ENCODE measurements at regions of chr12 and their contacts with region 1.

Region 1: DNA sequence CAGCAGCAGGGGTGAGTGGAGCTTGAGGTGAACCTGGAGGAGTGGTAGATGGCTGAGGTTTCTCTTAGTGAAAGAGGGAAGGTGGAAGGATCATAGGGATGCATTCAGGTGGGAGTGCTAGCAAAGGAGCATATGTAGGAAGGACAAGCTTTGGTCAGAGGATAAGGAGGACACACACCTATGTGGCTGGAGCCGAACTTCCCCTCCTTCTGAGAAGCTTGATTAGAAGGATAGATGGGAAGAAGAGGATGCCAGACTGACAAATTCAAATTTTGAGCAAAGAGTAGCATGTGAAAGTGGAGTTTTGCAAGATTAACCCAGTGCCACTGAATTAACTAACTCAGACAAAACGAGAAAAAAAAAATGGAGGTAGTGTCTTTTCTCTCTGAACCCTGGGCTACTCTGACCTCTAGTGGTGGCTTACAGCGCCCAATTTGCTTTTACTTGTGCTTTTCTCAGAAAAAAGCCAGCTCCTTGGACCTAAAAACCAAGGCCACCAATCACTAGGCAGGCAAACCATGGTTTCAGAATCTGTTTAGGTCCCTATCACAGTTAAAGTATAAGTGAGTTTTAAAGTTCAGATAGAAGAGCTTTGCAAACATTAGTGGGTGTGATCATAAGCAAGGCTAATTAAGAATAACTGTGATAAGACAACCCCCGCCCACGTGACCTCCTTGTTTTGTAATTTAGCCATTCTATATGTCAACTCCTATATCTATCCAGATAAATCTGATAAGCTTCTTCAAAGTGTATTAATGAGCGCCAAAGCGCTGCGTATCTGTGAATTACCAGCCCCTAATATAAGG is 15.5 kb downstream of the EMP1 start:
- DNase-seq: peak; percentile 56
- H3K4me3 ChIP-seq: 0 out of 4 replicates have a peak overlapping the region, but pooled peaks of 1 of the 2 experiments have one; percentile 14
- H3K27ac ChIP-seq: peak overlapping the region in 1 of 2 experiments; percentile 100; a peak in 2 of 4 replicates
- H3K4me1 ChIP-seq: peaks cover 7 to 46% of the 10 kb centered on the region in 2 experiments
- H3K27me3 ChIP-seq: no peaks in the 10 kb centered on the region
- CTCF ChIP-seq: peak; percentile 94
- EP300 ChIP-seq: no peak
- RAD21 ChIP-seq: peak; percentile 93

Region 2: DNA sequence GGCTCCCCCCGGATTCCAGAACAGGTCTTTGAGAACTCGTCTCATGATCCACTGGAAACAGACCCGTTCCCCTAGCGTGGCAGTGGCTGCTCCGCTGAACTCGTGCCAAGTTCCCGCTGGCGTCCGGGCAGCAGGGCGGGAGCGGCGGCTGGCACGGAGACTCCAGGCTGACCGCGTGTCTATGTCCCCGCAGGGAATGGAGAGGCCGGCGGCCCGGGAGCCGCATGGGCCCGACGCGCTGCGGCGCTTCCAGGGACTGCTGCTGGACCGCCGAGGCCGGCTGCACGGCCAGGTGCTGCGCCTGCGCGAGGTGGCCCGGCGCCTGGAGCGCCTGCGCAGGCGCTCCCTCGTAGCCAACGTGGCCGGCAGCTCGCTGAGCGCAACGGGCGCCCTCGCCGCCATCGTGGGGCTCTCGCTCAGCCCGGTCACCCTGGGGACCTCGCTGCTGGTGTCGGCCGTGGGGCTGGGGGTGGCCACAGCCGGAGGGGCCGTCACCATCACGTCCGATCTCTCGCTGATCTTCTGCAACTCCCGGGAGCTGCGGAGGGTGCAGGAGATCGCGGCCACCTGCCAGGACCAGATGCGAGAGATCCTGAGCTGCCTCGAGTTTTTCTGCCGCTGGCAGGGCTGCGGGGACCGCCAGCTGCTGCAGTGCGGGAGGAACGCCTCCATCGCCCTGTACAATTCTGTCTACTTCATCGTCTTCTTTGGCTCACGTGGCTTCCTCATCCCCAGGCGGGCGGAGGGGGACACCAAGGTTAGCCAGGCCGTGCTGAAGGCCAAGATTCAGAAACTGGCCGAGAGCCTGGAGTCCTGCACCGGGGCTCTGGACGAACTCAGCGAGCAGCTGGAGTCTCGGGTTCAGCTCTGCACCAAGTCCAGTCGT is 425.1 kb before region 1 on chr12:
- CTCF ChIA-PET with region 1: interaction called, 17 read pairs
- POLR2A ChIA-PET with region 1: no interaction called
- DNase-seq: peak; percentile 97
- H3K4me3 ChIP-seq: peak overlapping the region; percentile 51 to 54
- H3K27ac ChIP-seq: peak overlapping the region; percentile 49 to 92; a peak in 3 of 4 replicates
- H3K4me1 ChIP-seq: peaks cover 5 to 30% of the 10 kb centered on the region in 2 experiments; a peak in 3 of 4 replicates
- H3K27me3 ChIP-seq: no peaks in the 10 kb centered on the region
- CTCF ChIP-seq: 0 out of 2 replicates have a peak, but pooled peaks have one; percentile 5
- EP300 ChIP-seq: peak in 1 of 2 experiments; percentile 22; a peak in 1 of 4 replicates
- RAD21 ChIP-seq: no peak

Region 3: DNA sequence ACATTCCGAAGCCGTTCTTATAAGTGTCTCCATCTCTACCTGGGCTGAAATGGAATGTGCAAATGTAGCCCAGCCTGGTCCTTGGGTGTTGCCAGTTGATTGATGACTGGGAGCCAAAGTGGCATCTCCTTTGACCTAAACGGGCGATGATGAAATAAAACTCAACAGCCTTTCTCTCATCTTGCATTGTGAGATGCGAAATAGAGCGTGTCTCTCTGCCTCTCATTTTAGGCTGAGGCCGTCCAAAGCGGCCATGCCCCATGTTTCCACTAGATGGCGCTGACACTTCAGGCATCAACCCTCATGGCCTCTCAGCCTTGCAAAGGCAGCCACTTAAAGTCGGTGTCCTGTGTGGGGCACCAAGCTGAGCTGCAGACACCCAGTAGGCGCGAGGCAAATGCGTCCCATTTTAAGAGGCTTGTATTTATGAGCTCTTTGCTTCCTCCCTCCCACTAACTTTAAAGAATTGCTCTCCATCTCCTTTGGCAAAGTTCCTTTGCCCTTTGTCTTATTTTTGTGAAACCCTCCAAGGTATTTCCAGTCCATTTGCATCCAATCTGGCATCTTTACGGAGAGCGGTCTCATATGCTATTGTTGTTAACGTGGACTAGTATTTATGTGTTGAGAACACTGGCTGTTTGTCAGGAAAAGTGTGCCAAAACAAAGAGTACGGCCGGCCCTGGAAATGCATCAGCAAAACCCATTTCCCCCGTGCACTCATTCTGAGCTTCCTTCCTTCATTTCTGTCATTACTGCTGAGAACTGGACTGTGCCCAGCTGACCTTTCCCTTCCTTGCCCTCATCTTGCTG is 295.7 kb before region 1 on chr12:
- CTCF ChIA-PET with region 1: interaction called, 129 read pairs
- POLR2A ChIA-PET with region 1: no interaction called
- DNase-seq: peak; percentile 80
- H3K4me3 ChIP-seq: peak overlapping the region in 1 of 2 experiments; percentile 25; a peak in 1 of 4 replicates
- H3K27ac ChIP-seq: no peak overlapping the region
- H3K4me1 ChIP-seq: no peaks in the 10 kb centered on the region
- H3K27me3 ChIP-seq: no peaks in the 10 kb centered on the region
- CTCF ChIP-seq: peak; percentile 97
- EP300 ChIP-seq: no peak
- RAD21 ChIP-seq: peak; percentile 99

Region 4: GRCh38 chr12:12975322-12976077 is 236.6 kb before region 1 on chr12:
- CTCF ChIA-PET with region 1: interaction called, 40 read pairs
- POLR2A ChIA-PET with region 1: no interaction called
- DNase-seq: peak; percentile 12
- H3K4me3 ChIP-seq: no peak overlapping the region
- H3K27ac ChIP-seq: peak overlapping the region in 1 of 2 experiments; percentile 82; a peak in 3 of 4 replicates
- H3K4me1 ChIP-seq: peaks cover 2 to 17% of the 10 kb centered on the region in 2 experiments; a peak in 3 of 4 replicates
- H3K27me3 ChIP-seq: no peaks in the 10 kb centered on the region
- CTCF ChIP-seq: peak; percentile 41
- EP300 ChIP-seq: no peak
- RAD21 ChIP-seq: peak; percentile 47

Region 5: GRCh38 chr12:13000925-13001774 is 210.9 kb before region 1 on chr12:
- CTCF ChIA-PET with region 1: interaction called, 10 read pairs
- POLR2A ChIA-PET with region 1: no interaction called
- DNase-seq: peak; percentile 93
- H3K4me3 ChIP-seq: peak overlapping the region; percentile 70 to 76
- H3K27ac ChIP-seq: peak overlapping the region; percentile 69 to 87
- H3K4me1 ChIP-seq: peaks cover 6 to 16% of the 10 kb centered on the region in 2 experiments; a peak in 3 of 4 replicates
- H3K27me3 ChIP-seq: no peaks in the 10 kb centered on the region
- CTCF ChIP-seq: peak; percentile 44
- EP300 ChIP-seq: no peak
- RAD21 ChIP-seq: no peak

Region 6: DNA sequence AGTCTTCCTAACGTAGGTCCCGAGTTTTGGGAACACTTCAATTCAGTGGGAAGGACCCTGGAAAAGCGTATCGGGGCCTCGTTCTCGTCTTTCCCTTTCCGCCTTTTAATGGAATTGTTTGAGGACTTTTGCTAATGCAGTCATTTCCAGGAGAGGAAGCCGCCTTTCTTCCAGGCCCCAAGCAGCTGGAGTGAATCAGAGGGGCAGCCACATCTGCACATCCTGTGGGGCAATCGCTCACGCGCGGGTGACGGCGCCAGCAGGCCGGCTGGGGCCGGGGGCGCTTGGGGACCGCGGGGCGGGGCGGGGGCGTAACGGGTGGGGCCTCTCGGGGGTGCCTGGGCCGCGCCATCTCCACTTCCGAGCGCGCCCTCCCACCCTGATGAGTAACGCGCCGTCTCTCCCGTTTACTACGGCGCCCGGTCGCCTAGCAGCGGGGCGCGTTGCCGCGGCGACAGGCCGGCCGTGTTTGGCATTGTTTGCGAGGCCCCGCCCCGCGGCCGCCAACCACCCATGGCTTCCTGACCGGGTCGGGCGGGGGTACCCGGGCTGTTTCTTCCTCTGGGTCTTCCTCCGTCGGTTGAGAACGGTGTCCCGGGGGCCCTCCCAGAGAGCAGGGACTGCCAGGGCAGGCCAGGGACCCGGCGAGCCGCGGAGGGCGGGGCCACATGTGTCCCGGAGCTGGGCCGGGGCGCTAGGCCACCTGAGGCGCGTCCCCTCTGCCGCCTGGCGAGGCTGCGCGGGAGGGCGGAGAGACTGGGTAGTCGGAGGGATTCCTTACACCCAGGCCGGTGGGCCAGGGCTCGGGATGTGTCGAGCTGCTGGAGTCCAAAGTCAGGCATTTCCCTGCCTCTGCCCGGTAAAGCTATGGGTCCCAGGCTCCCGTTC is 110.9 kb before region 1 on chr12:
- CTCF ChIA-PET with region 1: interaction called, 47 read pairs
- POLR2A ChIA-PET with region 1: interaction called, 3 read pairs
- DNase-seq: peak; percentile 93
- H3K4me3 ChIP-seq: peak overlapping the region; percentile 55 to 58
- H3K27ac ChIP-seq: peak overlapping the region; percentile 71 to 100
- H3K4me1 ChIP-seq: peaks cover 14 to 55% of the 10 kb centered on the region in 2 experiments
- H3K27me3 ChIP-seq: no peaks in the 10 kb centered on the region
- CTCF ChIP-seq: no peak
- EP300 ChIP-seq: no peak; a peak in 1 of 4 replicates
- RAD21 ChIP-seq: no peak

Region 7: DNA sequence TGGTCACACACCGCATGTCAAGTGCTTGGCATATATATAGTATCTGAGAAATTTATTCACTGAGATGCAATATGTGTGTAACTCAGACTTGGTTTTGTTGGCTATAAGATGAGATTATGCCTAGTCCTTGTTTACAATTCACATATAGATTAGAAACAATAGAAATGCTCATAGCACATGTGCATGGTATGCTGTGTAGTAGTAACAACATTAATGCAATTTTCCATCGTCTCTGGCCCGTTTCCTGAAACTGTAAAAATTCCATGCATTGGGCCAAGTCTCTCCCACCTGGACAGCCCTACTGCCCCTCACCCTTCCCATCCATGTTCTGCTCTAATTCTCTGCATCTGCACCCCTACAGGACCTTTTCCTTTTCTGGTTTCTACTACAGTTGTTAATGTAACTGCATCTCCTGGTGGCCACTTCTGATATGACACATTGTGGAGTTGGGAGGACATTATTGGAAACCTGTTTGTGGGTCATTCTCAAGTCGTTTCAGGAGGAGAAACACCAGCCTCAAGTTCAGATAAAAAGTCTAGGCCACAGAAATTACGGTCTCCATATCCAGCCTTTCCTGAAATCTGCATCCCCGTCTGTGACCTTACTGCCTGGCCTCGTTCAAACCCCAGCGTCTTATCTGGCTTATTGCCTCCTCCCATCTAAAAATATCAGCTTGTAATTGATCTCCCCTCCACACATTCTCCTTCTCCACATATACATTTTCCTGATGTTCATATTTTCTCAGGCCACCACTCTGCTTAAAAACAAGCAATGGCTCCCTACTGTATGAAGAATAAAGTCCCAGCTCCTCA is 22.0 kb after region 1 on chr12:
- CTCF ChIA-PET with region 1: interaction called, 20 read pairs
- POLR2A ChIA-PET with region 1: no interaction called
- DNase-seq: peak; percentile 46
- H3K4me3 ChIP-seq: no peak overlapping the region
- H3K27ac ChIP-seq: no peak overlapping the region
- H3K4me1 ChIP-seq: no peaks in the 10 kb centered on the region
- H3K27me3 ChIP-seq: no peaks in the 10 kb centered on the region
- CTCF ChIP-seq: peak; percentile 85
- EP300 ChIP-seq: no peak
- RAD21 ChIP-seq: peak; percentile 74

Region 8: DNA sequence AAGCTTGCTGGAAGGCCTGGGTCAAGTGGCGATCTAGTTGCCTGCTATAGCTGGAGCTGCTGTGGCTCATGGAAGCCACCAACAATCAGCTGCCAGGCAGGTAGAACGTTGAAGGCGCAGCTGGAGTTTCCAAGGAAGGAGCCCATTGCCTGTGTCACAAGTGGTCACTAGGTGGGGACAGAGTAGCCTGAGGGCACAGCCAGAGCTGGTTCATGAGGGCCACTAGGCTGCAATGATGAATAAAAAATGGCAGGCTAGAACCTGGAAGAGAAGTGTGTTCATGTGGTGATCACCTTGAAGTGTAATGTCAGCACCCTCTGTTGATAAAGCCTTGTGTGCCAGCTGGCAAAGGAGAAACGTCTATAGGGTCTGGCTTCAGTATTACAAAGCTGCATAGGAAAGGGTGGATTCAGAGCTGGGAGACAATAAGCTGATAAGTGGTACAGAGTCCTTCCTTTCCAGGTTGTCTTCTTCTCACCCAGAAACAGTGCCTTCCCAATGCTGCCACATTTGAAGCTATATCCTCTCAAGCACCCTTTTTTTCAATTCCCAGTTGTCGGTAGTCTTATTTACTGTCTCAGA is 150.3 kb after region 1 on chr12:
- CTCF ChIA-PET with region 1: no interaction called
- POLR2A ChIA-PET with region 1: no interaction called
- DNase-seq: peak; percentile 65
- H3K4me3 ChIP-seq: 0 out of 4 replicates have a peak overlapping the region, but pooled peaks of 1 of the 2 experiments have one; percentile 33
- H3K27ac ChIP-seq: no peak overlapping the region
- H3K4me1 ChIP-seq: no peaks in the 10 kb centered on the region
- H3K27me3 ChIP-seq: peaks cover 4% of the 10 kb centered on the region; the same call in 1 of the 2 replicates
- CTCF ChIP-seq: peak; percentile 88
- EP300 ChIP-seq: no peak
- RAD21 ChIP-seq: peak; percentile 74